ENCODE measurements at regions of chr1 and their contacts with region 1.

Region 1: GRCh38 chr1:153626922-153627796 is at the start of gene S100A13:
- DNase-seq: peak; percentile 92 to 94
- H3K4me3 ChIP-seq: peak within 1 kb of the TSS; percentile 45 to 77 (median 72)
- H3K27ac ChIP-seq: peak within 1 kb of the TSS; percentile 59
- H3K4me1 ChIP-seq: peaks cover 0 to 13% (median 7%) of the 10 kb centered on the region in 4 experiments; a peak in 6 of 7 replicates
- H3K27me3 ChIP-seq: no peaks in the 10 kb centered on the region
- CTCF ChIP-seq: peak; percentile 86 to 94 (median 90)
- EP300 ChIP-seq: no peak
- POLR2A ChIP-seq: peak; percentile 94 to 98
- RAD21 ChIP-seq: peak; percentile 67 to 78
- total RNA-seq, gene S100A13: 63.6 and 65.3 TPM in 2 replicates

Region 2: DNA sequence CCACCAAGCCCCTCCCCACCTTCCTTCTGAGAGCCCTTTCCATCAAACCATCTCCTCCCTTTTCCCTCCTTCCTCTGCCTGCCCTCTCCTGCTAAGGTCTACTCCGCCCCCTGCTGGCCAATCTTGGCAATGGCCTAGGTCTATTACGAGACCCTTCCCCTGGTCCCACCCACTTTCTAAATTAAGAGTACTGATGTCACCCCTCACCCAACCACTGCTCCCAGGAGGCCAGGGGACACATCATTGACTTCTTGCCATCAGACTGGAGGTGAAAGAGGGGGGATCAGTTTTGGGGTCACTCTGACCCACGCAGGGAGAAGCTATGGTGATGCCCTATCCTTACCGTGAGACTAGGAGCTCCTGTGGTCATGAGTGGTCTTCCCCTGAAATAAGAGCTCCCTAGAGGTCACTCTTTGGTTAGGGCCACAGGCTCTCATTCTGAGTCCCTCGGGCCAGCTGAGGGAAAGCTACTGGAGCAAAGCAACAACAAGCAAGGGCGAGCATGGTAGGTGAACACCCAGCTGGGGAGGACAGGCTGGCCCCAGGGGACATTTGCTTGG is 132.1 kb before region 1 on chr1:
- CTCF ChIA-PET with region 1: interaction called, 10 read pairs
- POLR2A ChIA-PET with region 1: interaction called, 4 read pairs
- DNase-seq: peak; percentile 82 to 100
- H3K4me3 ChIP-seq: no peak overlapping the region
- H3K27ac ChIP-seq: 0 out of 2 replicates have a peak overlapping the region, but pooled peaks have one; percentile 38
- H3K4me1 ChIP-seq: peaks cover 0 to 6% (median 2%) of the 10 kb centered on the region in 4 experiments; a peak in 4 of 7 replicates
- H3K27me3 ChIP-seq: no peaks in the 10 kb centered on the region
- CTCF ChIP-seq: peak; percentile 80 to 94 (median 92)
- EP300 ChIP-seq: peak in 1 of 2 experiments; percentile 66; a peak in 2 of 3 replicates
- POLR2A ChIP-seq: no peak
- RAD21 ChIP-seq: peak; percentile 88 to 97

Region 3: GRCh38 chr1:153526132-153526543 is 101.0 kb before region 1 on chr1:
- CTCF ChIA-PET with region 1: interaction called, 63 read pairs
- POLR2A ChIA-PET with region 1: interaction called, 5 read pairs
- DNase-seq: no peak
- H3K4me3 ChIP-seq: no peak overlapping the region
- H3K27ac ChIP-seq: no peak overlapping the region
- H3K4me1 ChIP-seq: peaks cover 3 to 5% (median 5%) of the 10 kb centered on the region in 4 experiments; a peak in 3 of 7 replicates
- H3K27me3 ChIP-seq: no peaks in the 10 kb centered on the region
- CTCF ChIP-seq: no peak
- EP300 ChIP-seq: no peak
- POLR2A ChIP-seq: no peak
- RAD21 ChIP-seq: no peak

Region 4: DNA sequence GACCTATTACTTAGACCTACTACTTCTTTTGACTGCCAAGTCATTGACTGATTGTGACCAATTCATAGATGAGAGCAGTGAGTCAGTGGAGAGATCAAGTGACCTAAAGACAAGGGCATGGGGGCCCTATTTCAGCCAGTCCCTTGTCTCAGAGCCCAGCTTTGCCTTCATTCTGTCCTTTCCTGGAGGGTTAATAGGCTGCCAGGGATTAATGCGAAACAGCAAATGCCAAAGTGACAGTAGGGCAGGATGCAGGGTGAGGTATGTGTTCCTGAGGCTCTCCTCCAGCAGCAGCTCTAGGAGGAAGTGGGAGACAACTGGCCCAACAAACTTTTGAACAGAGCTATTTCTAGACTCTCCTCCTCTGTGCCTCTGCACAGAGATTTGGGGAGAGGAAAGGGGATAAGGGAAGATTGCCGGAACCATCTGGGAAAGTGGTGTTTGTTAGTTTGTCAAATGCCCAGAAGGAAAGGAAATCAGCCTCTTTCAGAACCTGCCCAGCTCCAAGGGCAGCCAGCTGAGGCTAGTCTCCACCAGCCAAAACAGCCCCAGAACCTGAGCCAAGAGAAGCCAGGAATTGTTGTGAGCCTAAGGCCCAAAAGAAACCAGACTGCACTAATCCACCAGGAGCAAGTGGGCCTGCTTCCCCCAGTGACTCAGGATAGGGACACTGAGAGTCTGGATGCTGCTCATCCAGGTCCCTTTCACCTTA is 73.2 kb before region 1 on chr1:
- CTCF ChIA-PET with region 1: interaction called, 39 read pairs
- POLR2A ChIA-PET with region 1: interaction called, 6 read pairs
- DNase-seq: no peak
- H3K4me3 ChIP-seq: no peak overlapping the region
- H3K27ac ChIP-seq: no peak overlapping the region
- H3K4me1 ChIP-seq: peaks cover 0 to 9% (median 0%) of the 10 kb centered on the region in 4 experiments; a peak in 1 of 7 replicates
- H3K27me3 ChIP-seq: no peaks in the 10 kb centered on the region; a peak in 2 of 7 replicates
- CTCF ChIP-seq: no peak
- EP300 ChIP-seq: no peak
- POLR2A ChIP-seq: no peak
- RAD21 ChIP-seq: no peak

Region 5: GRCh38 chr1:153587314-153587713 is 39.8 kb before region 1 on chr1:
- CTCF ChIA-PET with region 1: interaction called, 16 read pairs
- POLR2A ChIA-PET with region 1: interaction called, 10 read pairs
- DNase-seq: no peak
- H3K4me3 ChIP-seq: no peak overlapping the region
- H3K27ac ChIP-seq: no peak overlapping the region
- H3K4me1 ChIP-seq: no peaks in the 10 kb centered on the region
- H3K27me3 ChIP-seq: no peaks in the 10 kb centered on the region
- CTCF ChIP-seq: no peak
- EP300 ChIP-seq: no peak
- POLR2A ChIP-seq: no peak
- RAD21 ChIP-seq: no peak

Region 6: GRCh38 chr1:153608742-153609584 is 18.2 kb before region 1 on chr1:
- CTCF ChIA-PET with region 1: interaction called, 114 read pairs
- POLR2A ChIA-PET with region 1: interaction called, 261 read pairs
- DNase-seq: peak; percentile 41 to 90
- H3K4me3 ChIP-seq: no peak overlapping the region
- H3K27ac ChIP-seq: no peak overlapping the region
- H3K4me1 ChIP-seq: peaks cover 0 to 35% (median 21%) of the 10 kb centered on the region in 4 experiments; a peak in 6 of 7 replicates
- H3K27me3 ChIP-seq: no peaks in the 10 kb centered on the region; a peak in 1 of 7 replicates
- CTCF ChIP-seq: no peak
- EP300 ChIP-seq: no peak
- POLR2A ChIP-seq: no peak
- RAD21 ChIP-seq: no peak

Region 7: DNA sequence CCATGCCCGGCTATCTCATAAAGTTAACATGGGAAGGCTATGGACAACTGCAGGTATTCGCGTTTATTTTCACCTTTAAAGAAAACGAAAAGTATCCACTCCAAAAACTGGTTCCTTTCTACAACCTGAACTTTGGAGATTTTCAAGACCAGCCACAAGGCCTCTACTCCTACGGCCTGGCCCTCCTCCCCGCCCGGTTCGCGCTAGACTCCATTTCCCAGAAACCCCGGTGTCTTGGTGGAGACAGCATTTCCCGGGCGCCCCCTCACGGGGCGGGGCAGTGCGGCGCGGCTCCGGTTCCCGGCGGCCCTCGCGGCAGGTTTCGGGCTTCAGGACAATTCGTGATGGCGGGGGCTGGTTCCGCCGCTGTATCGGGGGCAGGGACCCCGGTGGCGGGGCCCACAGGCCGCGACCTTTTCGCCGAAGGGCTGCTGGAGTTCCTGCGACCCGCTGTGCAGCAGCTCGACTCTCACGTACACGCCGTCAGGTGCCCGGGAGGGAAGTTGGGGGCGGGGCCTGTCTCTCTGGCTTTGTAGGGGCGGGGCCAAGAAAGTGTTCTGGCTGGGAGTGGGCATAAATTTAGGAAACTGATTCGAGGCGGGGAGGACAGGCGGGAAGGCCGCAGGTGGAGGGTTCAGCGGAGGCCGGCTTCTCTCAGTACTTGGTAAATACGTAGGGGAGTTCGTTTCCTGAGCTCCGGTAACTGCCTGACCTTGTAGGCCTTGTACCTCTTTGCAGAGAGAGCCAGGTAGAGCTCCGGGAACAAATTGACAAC is 31.4 kb after region 1 on chr1 and contains the start of gene SNAPIN:
- CTCF ChIA-PET with region 1: interaction called, 9 read pairs
- POLR2A ChIA-PET with region 1: interaction called, 10 read pairs
- DNase-seq: peak; percentile 64 to 96
- H3K4me3 ChIP-seq: peak within 1 kb of the TSS; percentile 71 to 98 (median 90)
- H3K27ac ChIP-seq: peak within 1 kb of the TSS; percentile 85; the same call in 1 of the 2 replicates
- H3K4me1 ChIP-seq: peaks cover 0 to 4% (median 2%) of the 10 kb centered on the region in 4 experiments; a peak in 2 of 7 replicates
- H3K27me3 ChIP-seq: no peaks in the 10 kb centered on the region
- CTCF ChIP-seq: peak in 2 of 3 experiments; percentile 4 to 6; a peak in 2 of 4 replicates
- EP300 ChIP-seq: no peak
- POLR2A ChIP-seq: peak in 1 of 2 experiments; percentile 83; a peak in 2 of 3 replicates
- RAD21 ChIP-seq: peak in 1 of 2 experiments; percentile 6; a peak in 1 of 4 replicates
- total RNA-seq, gene SNAPIN: 22.3 and 25.7 TPM in 2 replicates

Measured in H1 (cell line).